Heart left ventricle (tissue), 16 donors: ENCODE measurements at regions of chr7 and their contacts with region 1.

Region 1: GRCh38 chr7:100215895-100216294 is 3.9 kb upstream of the PVRIG start:
- DNase-seq: peak in 4 of 5 donors; percentile 30 to 71 (median 48)
- ATAC-seq: peak; percentile 59 to 71 (median 64)
- H3K4me3 ChIP-seq: no peak overlapping the region
- H3K27ac ChIP-seq: peak overlapping the region in 2 of 12 donors; percentile 4 to 7
- H3K4me1 ChIP-seq: peaks cover 0 to 13% (median 0%) of the 10 kb centered on the region in 12 donors
- H3K27me3 ChIP-seq: no peaks in the 10 kb centered on the region
- CTCF ChIP-seq: no peak
- POLR2A ChIP-seq: no peak

Region 2: GRCh38 chr7:99997545-99998137 is 218.3 kb before region 1 on chr7:
- intact Hi-C with region 1: loop called in 1 of 10 experiments (anchors 10 kb)
- DNase-seq: peak; percentile 42 to 86 (median 65)
- ATAC-seq: peak; percentile 53 to 79 (median 74)
- H3K4me3 ChIP-seq: peak overlapping the region; percentile 35 to 75 (median 60)
- H3K27ac ChIP-seq: peak overlapping the region; percentile 59 to 90 (median 81)
- H3K4me1 ChIP-seq: peaks cover 0 to 21% (median 11%) of the 10 kb centered on the region in 12 donors
- H3K27me3 ChIP-seq: no peaks in the 10 kb centered on the region
- CTCF ChIP-seq: peak in 11 of 12 donors; percentile 16 to 58 (median 31)
- POLR2A ChIP-seq: peak in 1 of 2 donors; percentile 37

Region 3: GRCh38 chr7:100132697-100133151 is 83.2 kb before region 1 on chr7:
- intact Hi-C with region 1: loop called (anchors 2 to 5 kb)
- DNase-seq: peak in 2 of 5 donors; percentile 51 to 52
- ATAC-seq: peak; percentile 78 to 83 (median 80)
- H3K4me3 ChIP-seq: no peak overlapping the region
- H3K27ac ChIP-seq: no peak overlapping the region
- H3K4me1 ChIP-seq: peaks cover 0 to 16% (median 7%) of the 10 kb centered on the region in 12 donors
- H3K27me3 ChIP-seq: no peaks in the 10 kb centered on the region
- CTCF ChIP-seq: peak; percentile 55 to 83 (median 75)
- POLR2A ChIP-seq: no peak

Region 4: GRCh38 chr7:100137851-100138760 is 77.8 kb before region 1 on chr7:
- intact Hi-C with region 1: loop called (anchors 2 to 5 kb)
- DNase-seq: no peak
- ATAC-seq: no peak
- H3K4me3 ChIP-seq: no peak overlapping the region
- H3K27ac ChIP-seq: no peak overlapping the region
- H3K4me1 ChIP-seq: no peaks in the 10 kb centered on the region
- H3K27me3 ChIP-seq: peaks cover 0 to 15% (median 0%) of the 10 kb centered on the region in 9 donors
- CTCF ChIP-seq: no peak
- POLR2A ChIP-seq: no peak

Region 5: DNA sequence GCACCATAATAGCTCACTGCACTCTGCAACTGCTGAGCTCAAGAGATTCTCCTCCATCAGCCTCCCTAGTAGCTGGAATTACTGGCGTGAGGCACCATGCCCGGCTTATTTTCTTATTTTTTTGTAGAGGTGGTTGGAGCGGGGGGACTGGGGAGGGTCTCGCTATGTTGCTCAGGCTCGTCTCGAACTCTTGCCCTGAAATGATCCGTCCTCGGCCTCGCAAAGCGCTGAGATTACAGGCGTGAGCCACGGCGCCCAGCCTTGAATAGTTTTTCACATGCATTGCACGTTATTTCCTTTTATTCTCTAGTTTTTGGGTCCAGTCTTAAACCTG is 67.7 kb before region 1 on chr7:
- intact Hi-C with region 1: no loop called
- DNase-seq: no peak
- ATAC-seq: peak in 1 of 4 donors; percentile 1
- H3K4me3 ChIP-seq: peak overlapping the region; percentile 16 to 97 (median 76)
- H3K27ac ChIP-seq: peak overlapping the region in 11 of 12 donors; percentile 26 to 89 (median 83)
- H3K4me1 ChIP-seq: peaks cover 0 to 46% (median 12%) of the 10 kb centered on the region in 12 donors
- H3K27me3 ChIP-seq: no peaks in the 10 kb centered on the region
- CTCF ChIP-seq: no peak
- POLR2A ChIP-seq: no peak

Region 6: GRCh38 chr7:100257017-100257416 is 41.1 kb after region 1 on chr7:
- intact Hi-C with region 1: no loop called
- DNase-seq: no peak
- ATAC-seq: no peak
- H3K4me3 ChIP-seq: no peak overlapping the region
- H3K27ac ChIP-seq: no peak overlapping the region
- H3K4me1 ChIP-seq: no peaks in the 10 kb centered on the region
- H3K27me3 ChIP-seq: no peaks in the 10 kb centered on the region
- CTCF ChIP-seq: no peak
- POLR2A ChIP-seq: no peak

Region 7: DNA sequence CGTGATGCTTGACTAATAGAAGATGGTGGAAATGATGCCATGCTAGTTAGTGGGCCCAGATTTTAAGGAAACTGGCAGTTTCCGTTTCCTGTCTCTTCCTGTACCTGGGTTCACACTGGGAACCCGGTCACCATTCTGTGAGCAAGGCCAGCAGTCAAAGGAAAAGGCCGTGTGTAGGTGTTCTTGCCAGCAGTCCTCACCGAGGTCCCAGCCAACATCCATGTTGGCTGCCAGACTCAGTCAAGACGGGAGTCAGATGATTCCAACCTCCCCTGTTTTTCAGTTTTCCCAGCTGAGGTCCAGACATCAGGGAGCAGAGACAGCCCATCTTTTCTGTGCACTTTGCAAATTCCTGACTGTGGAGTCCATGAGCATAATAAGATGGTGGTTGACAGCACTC is 126.9 kb after region 1 on chr7:
- intact Hi-C with region 1: loop called in 1 of 10 experiments (anchors 10 kb)
- DNase-seq: peak in 1 of 5 donors; percentile 41
- ATAC-seq: peak in 3 of 4 donors; percentile 45 to 68 (median 57)
- H3K4me3 ChIP-seq: no peak overlapping the region
- H3K27ac ChIP-seq: peak overlapping the region in 6 of 12 donors; percentile 7 to 51 (median 32)
- H3K4me1 ChIP-seq: peaks cover 0 to 23% (median 13%) of the 10 kb centered on the region in 12 donors
- H3K27me3 ChIP-seq: no peaks in the 10 kb centered on the region
- CTCF ChIP-seq: no peak
- POLR2A ChIP-seq: no peak

Region 8: GRCh38 chr7:100599911-100600729 is 384.2 kb after region 1 on chr7:
- intact Hi-C with region 1: no loop called
- DNase-seq: no peak
- ATAC-seq: no peak
- H3K4me3 ChIP-seq: no peak overlapping the region
- H3K27ac ChIP-seq: no peak overlapping the region
- H3K4me1 ChIP-seq: peaks cover 0 to 24% (median 6%) of the 10 kb centered on the region in 12 donors
- H3K27me3 ChIP-seq: no peaks in the 10 kb centered on the region
- CTCF ChIP-seq: no peak
- POLR2A ChIP-seq: no peak